ENCODE measurements at regions of chr9 and their contacts with region 1.

Region 1: DNA sequence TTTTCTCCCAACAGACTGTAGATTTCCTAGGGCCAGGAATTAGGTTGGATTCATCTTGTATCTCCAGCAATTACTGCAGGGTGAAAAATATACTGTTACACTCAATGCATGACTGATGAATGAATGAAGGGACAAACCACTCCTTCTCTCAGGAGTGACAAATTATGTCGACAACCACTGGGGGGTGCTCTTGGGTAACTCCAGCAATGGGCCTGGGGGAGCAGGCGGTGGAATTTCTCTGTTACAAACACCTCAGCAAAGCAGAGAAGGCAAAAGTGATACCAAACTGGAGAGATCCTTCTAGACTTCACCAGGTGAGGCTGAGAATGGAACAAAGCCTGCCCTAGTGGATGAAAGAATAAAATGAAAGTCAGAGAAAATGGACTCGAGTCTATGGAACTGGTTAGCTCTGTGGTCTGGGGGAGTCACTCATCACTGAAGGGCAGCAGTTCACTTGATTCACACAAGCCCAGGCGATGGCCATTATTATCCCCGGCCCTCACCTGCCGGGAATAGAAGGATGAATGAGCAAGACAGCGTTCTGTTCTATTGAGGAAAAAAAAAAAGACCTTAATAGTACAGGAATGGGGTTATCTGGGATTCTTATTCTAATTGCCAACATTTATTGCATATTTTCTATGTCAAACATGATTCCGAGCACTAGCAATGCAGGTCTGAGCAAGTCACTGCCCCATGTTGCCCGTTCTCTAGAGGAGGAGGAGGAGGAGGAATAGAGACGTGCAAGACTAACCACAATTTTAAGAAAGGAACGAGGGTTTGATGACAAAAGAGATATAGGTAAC is 341.1 kb downstream of the ASTN2 start:
- DNase-seq: peak in 9 of 10 donors; percentile 51 to 76 (median 58)
- H3K4me3 ChIP-seq: no peak overlapping the region
- H3K27ac ChIP-seq: no peak overlapping the region
- H3K27me3 ChIP-seq: no peaks in the 10 kb centered on the region
- CTCF ChIP-seq: peak; percentile 58 to 87 (median 75)

Region 2: DNA sequence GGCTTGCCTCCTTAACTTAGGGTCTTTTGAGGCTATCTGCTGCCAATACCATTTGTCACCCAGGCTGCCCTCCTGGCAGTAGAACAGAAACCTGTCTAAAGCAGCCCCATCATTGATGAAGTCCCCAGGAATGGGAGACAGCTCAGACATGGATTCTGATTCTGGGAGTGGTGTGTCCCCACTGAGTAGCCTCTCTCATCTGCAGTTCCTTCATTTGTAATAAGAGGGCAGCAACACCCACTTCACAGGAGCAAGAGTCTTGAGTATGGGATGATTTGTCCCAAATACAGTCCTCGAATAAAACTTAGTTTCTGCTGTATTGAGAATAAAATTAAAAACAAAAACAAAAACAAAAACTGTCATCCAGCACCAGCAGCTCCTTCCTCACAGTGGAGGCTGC is 173.5 kb after region 1 on chr9:
- intact Hi-C with region 1: loop called in 1 of 2 experiments (anchors 5 kb)
- DNase-seq: peak in 2 of 10 donors; percentile 33 to 34
- H3K4me3 ChIP-seq: no peak overlapping the region
- H3K27ac ChIP-seq: peak overlapping the region in 1 of 59 donors; percentile 31
- H3K27me3 ChIP-seq: no peaks in the 10 kb centered on the region
- CTCF ChIP-seq: peak; percentile 30 to 78 (median 65)